ENCODE measurements at regions of chr13 and their contacts with region 1.

Region 1: DNA sequence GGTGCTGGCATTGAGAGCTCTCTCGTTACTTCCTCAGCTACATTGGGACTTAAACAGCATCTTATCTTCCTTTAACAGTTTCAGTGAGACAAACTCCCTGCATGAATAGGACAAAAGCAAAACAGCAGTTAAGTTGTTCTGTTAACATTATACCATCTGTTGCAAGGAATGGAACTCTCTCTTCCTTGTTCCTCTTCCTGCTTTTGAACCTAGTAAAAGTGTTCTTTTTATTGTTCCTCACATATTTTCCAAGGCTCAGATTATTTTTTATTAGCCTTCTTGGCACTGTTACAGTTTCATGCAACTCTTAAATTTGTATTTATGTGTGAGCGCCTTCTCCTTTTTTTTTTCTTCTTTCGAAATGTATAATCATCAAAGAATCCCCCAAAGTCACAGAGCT is 202.6 kb upstream of the UFM1 start:
- DNase-seq: no peak
- ATAC-seq: no peak
- H3K4me3 ChIP-seq: no peak overlapping the region
- H3K27ac ChIP-seq: no peak overlapping the region
- H3K4me1 ChIP-seq: no peaks in the 10 kb centered on the region
- H3K27me3 ChIP-seq: no peaks in the 10 kb centered on the region
- CTCF ChIP-seq: no peak

Region 2: GRCh38 chr13:38473305-38473704 is 326.3 kb after region 1 on chr13:
- intact Hi-C with region 1: loop called in 1 of 10 experiments (anchors 5 kb)
- DNase-seq: no peak
- ATAC-seq: no peak
- H3K4me3 ChIP-seq: no peak overlapping the region
- H3K27ac ChIP-seq: no peak overlapping the region
- H3K4me1 ChIP-seq: no peaks in the 10 kb centered on the region
- H3K27me3 ChIP-seq: no peaks in the 10 kb centered on the region
- CTCF ChIP-seq: no peak

Measured in heart right ventricle (tissue), 16 donors.